CD8-positive, alpha-beta memory T cell (primary cell): ENCODE measurements at regions of chr2 and their contacts with region 1.

Region 1: DNA sequence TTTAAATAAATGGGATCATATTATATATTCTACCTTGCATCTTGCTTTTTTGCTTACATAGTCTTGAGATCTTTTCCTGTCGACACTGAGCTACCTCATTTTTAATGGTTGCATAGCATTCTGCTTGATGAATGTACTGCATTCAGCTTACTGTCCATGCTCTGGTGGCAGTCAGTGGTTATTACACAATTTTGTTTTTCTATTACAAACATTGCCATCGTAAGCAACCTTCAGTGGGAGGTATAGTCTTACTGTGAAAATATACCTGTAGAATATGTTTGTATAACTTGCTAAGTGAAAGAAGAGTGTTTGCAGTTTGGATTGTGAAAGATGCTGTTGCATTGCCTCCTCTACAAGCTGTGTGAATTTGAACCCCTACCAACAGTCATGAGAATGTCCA is 43.4 kb downstream of the UBXN4 start:
- DNase-seq: no peak
- H3K4me3 ChIP-seq: no peak overlapping the region
- H3K4me3 Mint-ChIP-seq: no peak overlapping the region
- H3K27ac ChIP-seq: no peak overlapping the region
- H3K27ac Mint-ChIP-seq: peak overlapping the region in 1 of 8 donors; percentile 32
- H3K4me1 ChIP-seq: no peaks in the 10 kb centered on the region
- H3K4me1 Mint-ChIP-seq: no peaks in the 10 kb centered on the region
- H3K27me3 ChIP-seq: no peaks in the 10 kb centered on the region
- H3K27me3 Mint-ChIP-seq: no peaks in the 10 kb centered on the region

Region 2: GRCh38 chr2:135797497-135798274 is 12.7 kb after region 1 on chr2:
- CTCF ChIA-PET with region 1: interaction called, 15 read pairs
- POLR2A ChIA-PET with region 1: no interaction called
- DNase-seq: peak; percentile 53 to 78 (median 66)
- H3K4me3 ChIP-seq: no peak overlapping the region
- H3K4me3 Mint-ChIP-seq: peak overlapping the region in 1 of 7 donors; percentile 56
- H3K27ac ChIP-seq: no peak overlapping the region
- H3K27ac Mint-ChIP-seq: no peak overlapping the region
- H3K4me1 ChIP-seq: peaks cover 7% of the 10 kb centered on the region
- H3K4me1 Mint-ChIP-seq: peaks cover 4 to 12% (median 6%) of the 10 kb centered on the region in 3 donors
- H3K27me3 ChIP-seq: no peaks in the 10 kb centered on the region
- H3K27me3 Mint-ChIP-seq: peaks cover 0 to 2% of the 10 kb centered on the region in 2 donors

Region 3: DNA sequence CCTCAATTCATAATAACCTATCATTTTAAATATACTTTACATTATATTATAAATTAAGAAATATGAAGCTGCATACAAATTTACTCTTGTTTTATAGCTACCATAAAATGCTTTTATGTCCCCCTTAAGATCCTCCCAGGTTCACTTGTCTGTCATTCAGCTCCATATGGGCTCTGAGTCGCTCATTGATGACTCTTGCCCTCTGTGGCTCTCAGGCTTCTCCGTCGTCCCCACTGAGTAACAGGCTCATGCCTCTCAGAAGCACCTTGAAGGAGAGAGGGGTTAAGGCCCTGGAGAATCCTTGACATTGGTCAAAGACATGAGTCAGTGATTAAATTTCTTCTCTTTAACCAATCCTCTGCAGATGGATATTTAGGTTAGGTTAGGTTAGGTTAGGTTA is 97.4 kb after region 1 on chr2:
- CTCF ChIA-PET with region 1: no interaction called
- POLR2A ChIA-PET with region 1: no interaction called
- DNase-seq: no peak
- H3K4me3 ChIP-seq: no peak overlapping the region
- H3K4me3 Mint-ChIP-seq: no peak overlapping the region
- H3K27ac ChIP-seq: no peak overlapping the region
- H3K27ac Mint-ChIP-seq: no peak overlapping the region
- H3K4me1 ChIP-seq: no peaks in the 10 kb centered on the region
- H3K4me1 Mint-ChIP-seq: peaks cover 0 to 4% (median 3%) of the 10 kb centered on the region in 3 donors
- H3K27me3 ChIP-seq: no peaks in the 10 kb centered on the region
- H3K27me3 Mint-ChIP-seq: peaks cover 16 to 17% of the 10 kb centered on the region in 2 donors